Activated CD8-positive, alpha-beta memory T cell treated with anti-CD3 and anti-CD28 coated beads, Interleukin-2, amount 10 ng/mL, durations not matched to agents 7 days and 5 days (primary cell): ENCODE measurements at regions of chr7 and their contacts with region 1.

Region 1: GRCh38 chr7:98021588-98022351 is 31.8 kb upstream of the OCM2 start:
- DNase-seq: peak; percentile 79
- ATAC-seq: peak; percentile 91
- H3K4me3 Mint-ChIP-seq: no peak overlapping the region
- H3K27ac Mint-ChIP-seq: no peak overlapping the region
- H3K4me1 Mint-ChIP-seq: peaks cover 6% of the 10 kb centered on the region
- H3K27me3 Mint-ChIP-seq: peaks cover 3% of the 10 kb centered on the region

Region 2: GRCh38 chr7:98162758-98163157 is 141.0 kb after region 1 on chr7:
- CTCF ChIA-PET with region 1: interaction called, 210 read pairs
- DNase-seq: no peak
- ATAC-seq: no peak
- H3K4me3 Mint-ChIP-seq: no peak overlapping the region
- H3K27ac Mint-ChIP-seq: no peak overlapping the region
- H3K4me1 Mint-ChIP-seq: no peaks in the 10 kb centered on the region
- H3K27me3 Mint-ChIP-seq: no peaks in the 10 kb centered on the region